PC-9 (cell line): ENCODE measurements at regions of chr3 and their contacts with region 1.

Region 1: GRCh38 chr3:187946163-187946691 is 201.0 kb upstream of the BCL6 start:
- DNase-seq: peak in 1 of 2 experiments; percentile 57
- H3K4me3 ChIP-seq: peak overlapping the region; percentile 45; the same call in 1 of the 2 replicates
- H3K27ac ChIP-seq: peak overlapping the region; percentile 94
- H3K4me1 ChIP-seq: peaks cover 67% of the 10 kb centered on the region
- H3K27me3 ChIP-seq: no peaks in the 10 kb centered on the region
- CTCF ChIP-seq: no peak

Region 2: GRCh38 chr3:187798126-187798525 is 148.1 kb before region 1 on chr3:
- CTCF ChIA-PET with region 1: interaction called, 12 read pairs
- POLR2A ChIA-PET with region 1: no interaction called
- intact Hi-C with region 1: no loop called
- DNase-seq: no peak
- H3K4me3 ChIP-seq: no peak overlapping the region
- H3K27ac ChIP-seq: no peak overlapping the region
- H3K4me1 ChIP-seq: peaks cover 5% of the 10 kb centered on the region; the same call in 1 of the 2 replicates
- H3K27me3 ChIP-seq: no peaks in the 10 kb centered on the region
- CTCF ChIP-seq: no peak

Region 3: GRCh38 chr3:187974871-187975271 is 28.6 kb after region 1 on chr3:
- CTCF ChIA-PET with region 1: no interaction called
- POLR2A ChIA-PET with region 1: no interaction called
- intact Hi-C with region 1: loop called (anchors 2 kb)
- DNase-seq: no peak
- H3K4me3 ChIP-seq: no peak overlapping the region
- H3K27ac ChIP-seq: peak overlapping the region; percentile 35
- H3K4me1 ChIP-seq: peaks cover 76% of the 10 kb centered on the region
- H3K27me3 ChIP-seq: no peaks in the 10 kb centered on the region
- CTCF ChIP-seq: peak; percentile 42; the same call in 1 of the 2 replicates